BJ (cell line): ENCODE measurements at regions of chr16 and their contacts with region 1.

Region 1: GRCh38 chr16:3971261-3971660 is 90.7 kb upstream of the CREBBP start:
- DNase-seq: peak; percentile 48
- H3K4me3 ChIP-seq: no peak overlapping the region
- H3K27me3 ChIP-seq: no peaks in the 10 kb centered on the region
- CTCF ChIP-seq: no peak

Region 2: DNA sequence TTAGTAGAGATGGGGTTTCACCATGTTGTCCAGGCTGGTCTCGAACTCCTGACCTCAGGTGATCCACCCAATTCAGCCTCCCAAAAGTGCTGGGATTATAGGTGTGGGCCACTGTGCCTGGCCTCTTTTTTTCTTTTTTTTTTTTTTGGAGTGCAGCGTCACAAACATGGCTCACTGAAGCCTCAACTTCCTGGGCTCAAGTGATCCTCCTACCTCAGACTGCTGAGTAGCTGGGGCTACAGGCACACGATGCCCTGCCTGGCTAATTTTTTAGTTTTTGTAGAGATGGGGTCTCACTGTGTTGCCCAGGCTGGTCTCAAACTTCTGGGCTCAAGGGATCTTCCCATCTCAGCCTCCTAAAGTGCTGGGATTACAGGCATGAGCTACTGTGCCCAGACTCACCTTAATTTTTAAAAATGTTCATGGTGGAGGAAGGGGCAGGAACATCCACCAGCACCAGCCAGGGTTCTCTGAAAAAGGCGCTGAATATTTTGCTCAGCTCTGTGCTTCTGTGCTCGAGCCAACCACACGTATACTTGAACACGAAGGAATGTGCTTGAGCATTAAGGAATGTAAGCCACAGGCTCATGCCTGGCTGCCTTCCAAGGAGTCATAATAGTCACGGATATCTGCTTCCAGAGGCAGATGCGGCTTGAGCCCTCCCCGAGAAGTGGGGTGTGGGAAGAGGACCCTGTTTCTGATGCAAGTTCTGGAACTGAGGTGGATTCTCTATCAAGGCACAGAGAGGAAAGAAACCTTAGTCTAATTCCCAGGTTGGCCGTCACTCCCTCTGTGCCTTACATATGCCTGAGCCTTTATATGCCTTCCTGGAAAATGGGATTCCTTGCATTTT is 25.3 kb before region 1 on chr16:
- CTCF ChIA-PET with region 1: no interaction called
- POLR2A ChIA-PET with region 1: no interaction called
- DNase-seq: peak; percentile 94
- H3K4me3 ChIP-seq: no peak overlapping the region
- H3K27me3 ChIP-seq: no peaks in the 10 kb centered on the region
- CTCF ChIP-seq: no peak

Region 3: DNA sequence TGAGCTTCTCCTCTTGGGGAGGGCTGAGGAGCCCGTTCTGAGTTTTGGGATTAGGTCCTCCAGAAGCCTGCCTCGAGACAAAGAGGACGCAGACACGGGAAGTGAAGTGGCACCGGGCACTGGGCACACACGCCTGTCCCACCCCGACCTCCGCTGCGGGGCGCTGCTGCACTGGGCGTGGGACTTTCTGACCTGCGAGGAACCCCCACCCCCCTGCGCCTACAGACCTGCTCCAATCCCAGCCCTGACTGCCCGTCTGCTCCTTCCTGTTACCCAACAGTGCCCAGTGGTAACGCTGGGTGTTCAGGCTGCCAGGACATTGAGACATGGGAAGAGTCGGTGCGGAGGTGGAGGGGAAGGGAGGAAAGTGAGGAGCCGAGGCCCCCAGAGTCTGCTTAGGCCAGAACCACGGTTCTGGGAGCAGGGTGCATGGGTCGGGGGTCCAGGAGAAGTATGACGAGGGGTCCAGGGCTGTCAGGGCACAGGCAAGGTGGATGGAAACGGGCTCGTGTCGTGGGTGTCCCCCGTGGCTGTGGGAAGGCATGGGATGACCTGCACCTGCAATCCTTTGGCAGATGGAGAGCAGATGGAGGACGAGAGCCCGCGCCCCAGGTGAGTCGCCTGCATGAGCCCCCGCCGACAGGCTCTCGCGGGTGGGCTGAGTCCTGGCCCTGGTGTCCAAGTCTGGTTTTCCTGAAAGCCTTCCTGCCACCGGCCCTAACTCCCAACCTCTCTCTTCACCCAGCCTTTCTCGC is 21.2 kb after region 1 on chr16:
- CTCF ChIA-PET with region 1: no interaction called
- POLR2A ChIA-PET with region 1: interaction called, 13 read pairs
- DNase-seq: no peak
- H3K4me3 ChIP-seq: no peak overlapping the region
- H3K27me3 ChIP-seq: no peaks in the 10 kb centered on the region
- CTCF ChIP-seq: no peak